Activated naive CD4-positive, alpha-beta T cell treated with anti-CD3 and anti-CD28 coated beads for 36 hours (primary cell): ENCODE measurements at regions of chr15 and their contacts with region 1.

Region 1: DNA sequence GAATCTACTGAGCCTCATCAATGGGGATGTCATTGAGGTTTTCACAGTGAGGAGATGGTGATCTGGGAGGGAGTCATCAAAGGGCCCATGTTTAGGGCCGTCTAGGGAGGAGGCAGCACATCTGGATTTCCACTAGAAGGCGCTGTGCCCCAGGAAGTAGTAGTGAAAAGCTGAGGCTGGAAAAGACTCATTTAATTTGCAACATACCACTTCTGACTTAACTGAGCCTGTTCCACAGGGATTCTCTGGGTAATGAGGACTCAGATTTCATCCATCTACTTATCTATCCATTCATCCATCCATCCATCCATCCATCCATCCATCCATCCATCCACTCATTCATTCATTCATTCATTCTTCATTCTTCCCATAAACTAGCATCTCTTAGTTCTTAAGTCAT is 17.4 kb upstream of the SHF start:
- DNase-seq: peak; percentile 86
- H3K4me3 Mint-ChIP-seq: no peak overlapping the region
- H3K27ac Mint-ChIP-seq: no peak overlapping the region
- H3K4me1 Mint-ChIP-seq: peaks cover 3% of the 10 kb centered on the region
- H3K27me3 Mint-ChIP-seq: peaks cover 4% of the 10 kb centered on the region

Region 2: GRCh38 chr15:45106002-45106790 is 99.0 kb before region 1 on chr15:
- CTCF ChIA-PET with region 1: no interaction called
- intact Hi-C with region 1: no loop called
- DNase-seq: no peak
- H3K4me3 Mint-ChIP-seq: no peak overlapping the region
- H3K27ac Mint-ChIP-seq: no peak overlapping the region
- H3K4me1 Mint-ChIP-seq: peaks cover 4% of the 10 kb centered on the region
- H3K27me3 Mint-ChIP-seq: peaks cover 19% of the 10 kb centered on the region

Region 3: DNA sequence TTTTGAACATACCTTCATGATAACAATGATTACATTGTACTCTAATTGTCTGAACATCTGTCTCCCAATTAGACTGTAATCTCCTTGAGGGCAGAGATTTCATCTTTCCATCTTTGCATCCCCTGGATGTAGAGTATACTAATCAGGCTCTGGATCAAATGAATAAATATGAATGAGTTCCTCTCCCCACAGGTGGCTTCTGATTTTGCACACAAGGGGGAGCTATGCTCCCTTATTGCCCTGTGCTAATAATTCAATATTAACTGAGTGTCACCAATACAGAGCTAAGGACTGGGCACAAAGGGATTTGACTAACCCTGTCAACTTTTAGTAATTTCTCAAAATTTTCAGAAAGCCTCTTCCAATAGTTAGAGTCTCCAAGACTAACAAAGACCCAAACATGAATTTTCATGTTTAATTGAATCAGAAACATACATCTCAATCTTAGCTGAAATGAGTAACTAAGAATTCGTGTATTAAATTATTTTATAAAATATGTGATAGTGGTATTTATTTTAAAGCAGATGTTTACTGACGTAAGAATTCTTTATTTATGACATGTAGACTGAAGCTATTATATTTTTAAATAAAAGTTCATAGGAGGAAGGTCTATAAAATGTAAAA is 78.5 kb before region 1 on chr15:
- CTCF ChIA-PET with region 1: interaction called, 5 read pairs
- intact Hi-C with region 1: loop called (anchors 1 kb)
- DNase-seq: peak; percentile 62
- H3K4me3 Mint-ChIP-seq: no peak overlapping the region
- H3K27ac Mint-ChIP-seq: no peak overlapping the region
- H3K4me1 Mint-ChIP-seq: peaks cover 4% of the 10 kb centered on the region
- H3K27me3 Mint-ChIP-seq: peaks cover 47% of the 10 kb centered on the region

Region 4: GRCh38 chr15:45279024-45279698 is 74.0 kb after region 1 on chr15:
- CTCF ChIA-PET with region 1: interaction called, 10 read pairs
- intact Hi-C with region 1: no loop called
- DNase-seq: peak; percentile 96
- H3K4me3 Mint-ChIP-seq: peak overlapping the region; percentile 81
- H3K27ac Mint-ChIP-seq: peak overlapping the region; percentile 52
- H3K4me1 Mint-ChIP-seq: peaks cover 17% of the 10 kb centered on the region
- H3K27me3 Mint-ChIP-seq: no peaks in the 10 kb centered on the region

Region 5: DNA sequence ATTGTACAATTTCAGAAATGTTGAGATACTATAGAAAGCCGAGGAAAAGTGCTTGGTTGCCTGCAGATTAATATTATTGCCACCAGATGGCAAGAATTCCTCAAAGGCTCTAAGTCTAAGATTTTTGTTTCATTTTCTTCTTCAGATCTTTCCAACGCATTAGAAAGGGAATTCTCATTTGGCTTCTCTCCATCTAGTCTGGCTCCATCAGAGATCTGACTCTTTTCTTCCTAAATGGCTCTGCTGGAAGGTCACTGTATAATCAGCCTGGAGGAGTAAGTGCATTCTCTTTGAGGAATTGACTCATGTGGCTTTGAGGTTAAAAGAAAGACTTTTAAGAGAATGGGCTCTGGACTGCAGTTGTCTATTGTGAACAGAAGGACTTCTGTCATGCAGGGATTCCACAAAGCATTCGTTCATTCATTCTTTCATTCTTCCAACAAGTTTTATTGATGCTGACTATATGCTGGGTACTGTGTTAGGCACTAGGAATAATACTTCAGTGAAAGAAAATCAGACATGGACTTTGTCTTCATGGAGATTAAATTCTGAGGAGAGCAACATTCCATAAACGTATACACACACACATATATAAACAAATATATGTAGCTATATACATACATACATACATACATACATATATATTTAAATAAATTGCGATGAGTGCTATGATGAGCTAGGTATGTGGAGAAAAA is 102.2 kb after region 1 on chr15:
- CTCF ChIA-PET with region 1: no interaction called
- intact Hi-C with region 1: loop called (anchors 1 kb)
- DNase-seq: no peak
- H3K4me3 Mint-ChIP-seq: peak overlapping the region; percentile 4
- H3K27ac Mint-ChIP-seq: no peak overlapping the region
- H3K4me1 Mint-ChIP-seq: peaks cover 4% of the 10 kb centered on the region
- H3K27me3 Mint-ChIP-seq: peaks cover 5% of the 10 kb centered on the region

Region 6: DNA sequence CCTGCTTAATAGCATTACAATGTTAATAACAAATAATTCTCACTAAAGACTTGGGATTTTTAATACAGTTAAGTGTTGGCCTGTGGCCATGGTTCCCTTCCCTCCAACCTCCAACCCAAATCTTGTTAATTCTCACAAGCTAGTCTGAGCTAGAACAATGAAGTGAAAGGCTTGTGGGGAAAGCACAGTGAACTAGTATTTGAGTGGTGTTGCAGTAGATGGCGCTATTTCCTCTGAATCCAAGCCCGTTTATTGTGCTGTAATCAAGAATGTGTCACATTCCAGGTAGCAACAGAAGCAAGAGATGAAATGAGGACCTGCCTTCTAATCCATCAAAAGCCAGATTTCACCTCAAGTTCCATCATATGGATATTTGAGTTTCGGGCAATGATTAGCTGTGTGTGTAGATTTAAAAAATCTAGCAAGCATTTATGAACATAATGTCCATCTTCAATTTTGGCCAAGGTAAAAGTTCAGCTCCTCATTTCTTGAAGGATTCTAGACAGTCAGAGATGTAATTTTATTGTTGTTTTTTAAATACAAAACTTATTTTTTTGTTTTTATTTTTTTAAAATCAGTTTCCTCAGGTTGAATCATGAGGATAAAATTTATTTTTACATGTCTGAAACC is 590.4 kb after region 1 on chr15:
- CTCF ChIA-PET with region 1: no interaction called
- intact Hi-C with region 1: no loop called
- DNase-seq: peak; percentile 41
- H3K4me3 Mint-ChIP-seq: no peak overlapping the region
- H3K27ac Mint-ChIP-seq: no peak overlapping the region
- H3K4me1 Mint-ChIP-seq: no peaks in the 10 kb centered on the region
- H3K27me3 Mint-ChIP-seq: peaks cover 13% of the 10 kb centered on the region